ENCODE measurements at regions of chr7 and their contacts with region 1.

Region 1: DNA sequence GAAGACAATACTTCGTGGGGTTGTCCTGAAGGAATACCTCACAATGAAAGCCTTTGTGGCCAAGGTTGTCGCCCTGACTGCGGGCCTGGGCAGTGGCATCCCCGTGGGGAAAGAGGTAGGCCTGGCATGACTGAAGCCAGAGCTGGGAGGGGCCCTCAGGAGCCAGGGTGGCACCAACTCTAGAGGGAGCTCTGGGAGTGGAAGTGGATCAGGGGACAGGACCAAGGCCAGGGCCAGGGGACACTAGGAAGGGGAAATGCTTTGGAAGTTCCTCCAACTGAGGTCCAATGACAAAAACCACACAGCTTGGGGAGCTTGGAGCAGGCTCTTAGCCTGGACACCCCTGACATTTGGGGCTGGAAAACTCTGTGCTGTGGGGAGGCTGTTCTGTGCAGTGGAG is 5.8 kb downstream of the CLCN1 start:
- DNase-seq: peak; percentile 58 to 63 (median 60)
- ATAC-seq: peak; percentile 33 to 56 (median 46)
- H3K4me3 ChIP-seq: no peak overlapping the region
- H3K27ac ChIP-seq: no peak overlapping the region
- H3K4me1 ChIP-seq: peaks cover 0 to 28% (median 12%) of the 10 kb centered on the region in 4 donors
- H3K27me3 ChIP-seq: no peaks in the 10 kb centered on the region
- CTCF ChIP-seq: peak; percentile 20 to 43 (median 24)
- POLR2A ChIP-seq: no peak

Region 2: DNA sequence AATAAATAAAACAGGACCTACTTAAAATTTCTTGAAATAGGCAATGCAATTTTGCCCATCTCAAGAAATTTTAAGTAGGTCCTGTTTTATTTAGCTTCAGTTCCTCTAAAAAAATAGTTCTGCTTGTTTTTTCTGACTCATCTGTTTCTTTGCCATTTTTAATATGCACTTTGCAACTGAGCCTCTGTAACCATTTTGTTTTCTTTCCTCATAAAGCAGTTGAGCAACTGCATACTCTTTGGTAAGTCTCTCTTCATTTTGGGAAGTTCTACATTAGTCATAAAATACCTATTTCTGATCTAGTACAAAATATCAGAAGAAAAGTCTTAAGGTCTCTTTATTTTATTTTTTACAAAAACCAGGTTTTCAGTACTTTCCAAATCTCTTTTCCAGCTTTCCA is 81.9 kb before region 1 on chr7:
- intact Hi-C with region 1: no loop called
- DNase-seq: no peak
- ATAC-seq: peak in 3 of 4 donors; percentile 39 to 56 (median 52)
- H3K4me3 ChIP-seq: peak overlapping the region in 1 of 3 donors; percentile 30
- H3K27ac ChIP-seq: peak overlapping the region; percentile 9 to 79 (median 37)
- H3K4me1 ChIP-seq: peaks cover 0 to 34% (median 0%) of the 10 kb centered on the region in 4 donors
- H3K27me3 ChIP-seq: no peaks in the 10 kb centered on the region
- CTCF ChIP-seq: no peak
- POLR2A ChIP-seq: no peak

Region 3: DNA sequence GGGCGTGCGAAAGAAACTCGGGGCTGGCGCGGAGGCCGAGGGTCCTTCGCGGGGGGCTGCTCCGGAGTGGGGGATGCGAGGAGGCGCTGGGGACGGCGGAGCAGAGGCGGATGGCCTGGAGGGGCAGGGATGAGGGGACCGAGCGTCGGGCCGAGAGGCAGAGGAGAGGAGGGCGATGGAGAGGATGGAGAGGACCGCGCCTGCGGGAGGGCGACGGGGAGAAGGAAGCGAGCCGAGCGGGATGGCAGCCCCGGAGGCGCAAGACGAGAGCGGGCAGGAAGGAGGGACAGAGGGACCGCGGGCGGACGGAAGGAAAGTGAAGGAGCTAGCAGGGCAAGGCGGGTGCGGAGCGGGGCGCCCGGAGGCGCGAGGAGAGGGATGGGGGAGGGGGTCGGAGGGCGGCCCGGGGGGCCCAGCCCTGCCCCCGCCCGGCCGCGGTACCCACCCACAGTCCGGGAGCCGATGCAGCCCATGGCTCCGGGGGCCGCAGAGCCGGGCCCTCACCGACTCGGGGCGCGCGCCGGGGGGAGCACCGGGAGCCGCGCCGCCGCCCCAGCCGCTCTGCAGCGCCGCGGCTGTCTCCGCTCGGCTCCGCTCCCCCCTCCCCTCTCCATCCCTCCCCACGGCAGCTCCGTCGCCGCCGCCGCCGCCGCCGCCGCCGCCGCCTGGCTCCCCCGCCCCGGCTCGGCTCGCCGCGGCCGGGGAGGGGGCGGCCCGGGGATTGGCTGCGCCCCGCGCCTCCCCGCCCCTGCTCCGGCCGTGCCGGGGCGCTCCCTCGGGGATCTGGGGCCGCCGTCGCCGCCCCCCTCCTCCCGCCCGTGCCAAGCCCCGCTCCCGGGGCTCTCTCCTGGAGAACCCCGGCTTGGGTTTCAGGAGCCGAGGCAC is 40.6 kb after region 1 on chr7 and contains the start of gene FAM131B:
- intact Hi-C with region 1: loop called in 1 of 2 experiments (anchors 10 kb)
- DNase-seq: no peak
- ATAC-seq: peak; percentile 43 to 54 (median 52)
- H3K4me3 ChIP-seq: peak within 1 kb of the TSS; percentile 33 to 46 (median 34)
- H3K27ac ChIP-seq: no peak within 1 kb of the TSS
- H3K4me1 ChIP-seq: peaks cover 0 to 5% (median 0%) of the 10 kb centered on the region in 4 donors
- H3K27me3 ChIP-seq: no peaks in the 10 kb centered on the region
- CTCF ChIP-seq: no peak
- POLR2A ChIP-seq: no peak
- total RNA-seq, gene FAM131B: 0.05 to 0.51 (median 0.14) TPM

Region 4: GRCh38 chr7:143416565-143417149 is 94.9 kb after region 1 on chr7:
- intact Hi-C with region 1: loop called (anchors 5 to 10 kb)
- DNase-seq: no peak
- ATAC-seq: peak; percentile 72 to 88 (median 80)
- H3K4me3 ChIP-seq: no peak overlapping the region
- H3K27ac ChIP-seq: no peak overlapping the region
- H3K4me1 ChIP-seq: peaks cover 0 to 8% (median 0%) of the 10 kb centered on the region in 4 donors
- H3K27me3 ChIP-seq: no peaks in the 10 kb centered on the region
- CTCF ChIP-seq: peak; percentile 77 to 83 (median 79)
- POLR2A ChIP-seq: no peak

Measured in right lobe of liver (tissue), 6 donors.